Activated CD4-positive, alpha-beta T cell treated with anti-CD3 and anti-CD28 coated beads, Interleukin-2, amount 10 ng/mL, durations not matched to agents 24 days and 14 days (primary cell): ENCODE measurements at regions of chr21 and their contacts with region 1.

Region 1: DNA sequence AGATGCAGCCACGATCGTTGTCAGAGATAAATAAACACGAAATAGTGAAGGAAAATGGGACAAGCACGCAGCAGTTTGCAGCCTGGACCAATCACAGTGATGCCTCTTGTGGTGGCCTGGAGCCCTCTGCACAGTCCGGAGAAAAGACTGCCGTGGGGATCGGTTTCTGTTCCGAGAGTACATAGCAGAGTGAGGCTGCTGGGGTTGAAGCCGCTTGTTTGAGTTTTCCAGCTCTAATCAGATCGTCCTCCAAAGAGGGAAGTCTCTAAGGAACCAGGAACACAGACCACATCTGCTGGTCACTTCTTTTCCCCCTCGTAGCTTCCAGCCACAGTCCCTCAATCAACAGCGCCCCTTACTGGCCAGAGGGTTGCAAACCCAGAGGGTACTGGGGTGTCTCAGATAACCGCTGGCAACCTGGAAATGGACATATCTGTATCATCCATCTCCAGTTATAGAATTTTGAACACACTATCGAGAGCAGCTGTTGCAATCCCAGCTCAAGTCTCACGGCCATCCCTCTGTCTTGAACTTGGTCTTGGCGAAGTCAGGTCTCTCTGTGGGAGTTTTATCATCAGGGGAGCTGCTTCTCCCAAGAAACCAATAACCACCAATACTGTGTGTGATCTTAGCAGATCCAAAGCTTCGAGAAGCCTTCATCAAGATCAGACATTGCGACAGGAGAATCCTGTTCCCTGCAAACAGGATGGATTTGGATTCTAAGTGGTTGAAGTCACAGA is 57.4 kb downstream of the OLIG1 start:
- DNase-seq: peak; percentile 86
- H3K4me3 Mint-ChIP-seq: peak overlapping the region; percentile 58
- H3K27ac Mint-ChIP-seq: no peak overlapping the region
- H3K4me1 Mint-ChIP-seq: peaks cover 5% of the 10 kb centered on the region
- H3K27me3 Mint-ChIP-seq: peaks cover 22% of the 10 kb centered on the region

Region 2: DNA sequence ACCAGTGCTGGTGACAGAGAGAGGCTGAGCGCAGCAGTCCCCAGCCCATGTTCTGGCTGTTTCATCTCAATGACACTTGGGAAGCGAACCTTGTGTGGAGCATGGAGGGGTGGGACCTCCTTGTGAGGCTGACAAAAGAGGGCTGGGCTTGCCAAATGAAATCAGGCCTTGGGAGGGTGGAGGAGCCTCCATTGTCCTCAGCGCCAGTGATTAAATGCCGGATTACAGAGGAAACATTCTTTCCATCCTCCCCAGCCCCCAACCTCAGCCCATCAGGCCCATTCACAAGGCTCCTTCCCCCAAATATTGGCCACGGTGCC is 292.4 kb before region 1 on chr21:
- intact Hi-C with region 1: loop called (anchors 5 kb)
- DNase-seq: no peak
- H3K4me3 Mint-ChIP-seq: no peak overlapping the region
- H3K27ac Mint-ChIP-seq: no peak overlapping the region
- H3K4me1 Mint-ChIP-seq: no peaks in the 10 kb centered on the region
- H3K27me3 Mint-ChIP-seq: peaks cover 18% of the 10 kb centered on the region

Region 3: GRCh38 chr21:32940079-32941014 is 187.0 kb before region 1 on chr21:
- intact Hi-C with region 1: loop called (anchors 1 kb)
- DNase-seq: peak; percentile 80
- H3K4me3 Mint-ChIP-seq: no peak overlapping the region
- H3K27ac Mint-ChIP-seq: no peak overlapping the region
- H3K4me1 Mint-ChIP-seq: no peaks in the 10 kb centered on the region
- H3K27me3 Mint-ChIP-seq: peaks cover 7% of the 10 kb centered on the region